CD4-positive, alpha-beta memory T cell (primary cell): ENCODE measurements at regions of chr21 and their contacts with region 1.

Region 1: DNA sequence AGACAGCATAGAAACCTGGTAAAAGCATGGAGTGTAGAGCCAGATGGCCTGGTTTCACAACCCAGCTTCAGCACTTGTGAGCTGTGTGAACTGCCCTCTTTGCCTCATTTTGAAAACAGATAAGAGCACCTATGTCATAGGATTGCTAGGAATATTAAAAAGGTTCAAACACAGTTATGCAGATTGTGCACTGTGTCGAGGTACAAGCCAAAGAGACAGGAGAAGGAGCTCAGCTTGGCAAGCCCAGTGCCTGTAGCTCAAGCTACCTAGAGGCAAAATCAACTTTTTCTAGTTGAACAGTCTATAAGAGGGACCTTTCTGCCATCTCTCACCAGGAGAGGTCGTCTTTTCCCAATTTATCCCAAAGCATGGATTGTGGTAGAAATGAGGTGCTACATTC is 5.0 kb downstream of the CHODL start:
- DNase-seq: no peak
- H3K4me3 ChIP-seq: no peak overlapping the region
- H3K4me3 Mint-ChIP-seq: no peak overlapping the region
- H3K27ac ChIP-seq: no peak overlapping the region
- H3K27ac Mint-ChIP-seq: no peak overlapping the region
- H3K4me1 ChIP-seq: no peaks in the 10 kb centered on the region
- H3K4me1 Mint-ChIP-seq: no peaks in the 10 kb centered on the region
- H3K27me3 ChIP-seq: no peaks in the 10 kb centered on the region
- H3K27me3 Mint-ChIP-seq: peaks cover 5 to 6% of the 10 kb centered on the region in 2 donors

Region 2: DNA sequence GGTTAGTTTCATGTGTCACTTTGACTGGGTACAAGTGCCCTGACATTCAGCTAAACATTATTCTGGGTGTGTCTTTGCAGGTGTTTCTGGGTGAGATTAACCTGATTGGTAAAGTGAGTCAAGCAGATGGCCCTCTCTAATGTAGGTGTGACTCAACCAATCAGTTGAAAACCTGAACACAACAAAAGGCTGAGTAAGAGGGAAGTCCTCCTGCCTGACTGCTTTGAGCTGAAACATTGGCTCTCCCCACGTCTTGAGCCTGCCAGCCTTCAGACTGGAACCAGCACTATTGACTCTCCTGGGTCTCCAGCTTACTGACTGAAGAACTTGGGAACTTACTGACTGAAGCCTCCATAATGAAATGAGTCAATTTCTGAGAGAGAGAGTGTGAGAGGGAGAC is 360.5 kb before region 1 on chr21:
- CTCF ChIA-PET with region 1: no interaction called
- POLR2A ChIA-PET with region 1: no interaction called
- intact Hi-C with region 1: no loop called
- DNase-seq: no peak
- H3K4me3 ChIP-seq: no peak overlapping the region
- H3K4me3 Mint-ChIP-seq: no peak overlapping the region
- H3K27ac ChIP-seq: no peak overlapping the region
- H3K27ac Mint-ChIP-seq: no peak overlapping the region
- H3K4me1 ChIP-seq: no peaks in the 10 kb centered on the region
- H3K4me1 Mint-ChIP-seq: no peaks in the 10 kb centered on the region
- H3K27me3 ChIP-seq: no peaks in the 10 kb centered on the region
- H3K27me3 Mint-ChIP-seq: no peaks in the 10 kb centered on the region

Region 3: GRCh38 chr21:18318156-18318555 is 68.5 kb after region 1 on chr21:
- CTCF ChIA-PET with region 1: no interaction called
- POLR2A ChIA-PET with region 1: no interaction called
- intact Hi-C with region 1: loop called (anchors 10 kb)
- DNase-seq: no peak
- H3K4me3 ChIP-seq: no peak overlapping the region
- H3K4me3 Mint-ChIP-seq: no peak overlapping the region
- H3K27ac ChIP-seq: no peak overlapping the region
- H3K27ac Mint-ChIP-seq: no peak overlapping the region
- H3K4me1 ChIP-seq: no peaks in the 10 kb centered on the region
- H3K4me1 Mint-ChIP-seq: no peaks in the 10 kb centered on the region
- H3K27me3 ChIP-seq: no peaks in the 10 kb centered on the region
- H3K27me3 Mint-ChIP-seq: no peaks in the 10 kb centered on the region

Region 4: DNA sequence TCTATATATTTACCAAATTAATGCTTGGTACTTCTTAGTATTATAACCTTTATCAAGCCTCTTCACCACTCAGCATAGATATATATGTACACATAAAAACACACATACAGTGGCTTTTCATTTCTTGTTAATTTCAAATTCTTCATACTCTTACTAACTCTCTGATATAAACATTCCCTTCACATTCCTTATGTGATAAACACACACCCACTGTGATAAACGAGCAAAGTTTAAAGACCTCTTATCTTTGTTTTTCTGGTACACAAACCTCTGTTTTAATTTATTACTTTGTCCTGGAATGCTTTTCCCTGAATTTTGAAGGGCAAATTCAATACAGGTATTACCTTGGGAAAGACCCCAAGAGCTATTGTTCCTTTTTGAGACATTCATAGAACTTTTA is 533.0 kb after region 1 on chr21:
- CTCF ChIA-PET with region 1: no interaction called
- POLR2A ChIA-PET with region 1: no interaction called
- intact Hi-C with region 1: no loop called
- DNase-seq: no peak
- H3K4me3 ChIP-seq: no peak overlapping the region
- H3K4me3 Mint-ChIP-seq: no peak overlapping the region
- H3K27ac ChIP-seq: no peak overlapping the region
- H3K27ac Mint-ChIP-seq: no peak overlapping the region
- H3K4me1 ChIP-seq: no peaks in the 10 kb centered on the region
- H3K4me1 Mint-ChIP-seq: no peaks in the 10 kb centered on the region
- H3K27me3 ChIP-seq: no peaks in the 10 kb centered on the region
- H3K27me3 Mint-ChIP-seq: no peaks in the 10 kb centered on the region